SK-N-SH (cell line): ENCODE measurements at regions of chr6 and their contacts with region 1.

Region 1: DNA sequence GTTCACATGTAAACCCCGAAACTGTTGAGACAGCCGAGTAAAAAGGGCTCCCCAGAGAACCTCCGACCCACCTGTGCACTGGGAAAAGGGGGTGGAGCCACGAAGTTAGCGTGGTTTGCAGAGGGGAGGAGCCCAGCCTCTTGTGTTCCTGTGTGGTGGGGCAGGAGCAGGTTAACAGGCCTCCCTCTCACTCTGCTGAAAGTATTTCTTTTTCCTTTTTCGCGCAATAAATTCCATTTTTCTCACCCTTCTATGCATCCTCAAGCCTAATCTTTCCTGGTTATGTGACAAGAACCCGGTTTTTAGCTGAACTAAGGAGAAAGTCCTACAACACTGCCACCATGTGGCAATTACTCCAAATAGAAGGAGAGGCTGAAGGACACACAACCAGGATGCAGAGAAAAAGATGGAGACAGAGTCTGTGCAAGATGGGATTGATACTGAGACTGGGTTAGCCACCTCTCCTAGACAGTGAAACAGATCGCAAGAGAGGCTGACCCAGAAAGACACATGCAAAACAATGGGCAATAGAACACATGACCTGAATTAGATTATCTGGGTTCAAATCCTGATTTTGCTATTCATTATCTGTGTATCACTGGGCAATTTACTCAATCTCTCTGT is 168.7 kb upstream of the PRSS16 start:
- DNase-seq: peak; percentile 52
- H3K4me3 ChIP-seq: peak overlapping the region; percentile 52 to 61
- H3K27ac ChIP-seq: no peak overlapping the region; a peak in 1 of 4 replicates
- H3K4me1 ChIP-seq: peaks cover 0 to 2% of the 10 kb centered on the region in 2 experiments; a peak in 1 of 4 replicates
- H3K27me3 ChIP-seq: no peaks in the 10 kb centered on the region
- CTCF ChIP-seq: peak; percentile 83
- EP300 ChIP-seq: no peak
- RAD21 ChIP-seq: peak; percentile 87

Region 2: DNA sequence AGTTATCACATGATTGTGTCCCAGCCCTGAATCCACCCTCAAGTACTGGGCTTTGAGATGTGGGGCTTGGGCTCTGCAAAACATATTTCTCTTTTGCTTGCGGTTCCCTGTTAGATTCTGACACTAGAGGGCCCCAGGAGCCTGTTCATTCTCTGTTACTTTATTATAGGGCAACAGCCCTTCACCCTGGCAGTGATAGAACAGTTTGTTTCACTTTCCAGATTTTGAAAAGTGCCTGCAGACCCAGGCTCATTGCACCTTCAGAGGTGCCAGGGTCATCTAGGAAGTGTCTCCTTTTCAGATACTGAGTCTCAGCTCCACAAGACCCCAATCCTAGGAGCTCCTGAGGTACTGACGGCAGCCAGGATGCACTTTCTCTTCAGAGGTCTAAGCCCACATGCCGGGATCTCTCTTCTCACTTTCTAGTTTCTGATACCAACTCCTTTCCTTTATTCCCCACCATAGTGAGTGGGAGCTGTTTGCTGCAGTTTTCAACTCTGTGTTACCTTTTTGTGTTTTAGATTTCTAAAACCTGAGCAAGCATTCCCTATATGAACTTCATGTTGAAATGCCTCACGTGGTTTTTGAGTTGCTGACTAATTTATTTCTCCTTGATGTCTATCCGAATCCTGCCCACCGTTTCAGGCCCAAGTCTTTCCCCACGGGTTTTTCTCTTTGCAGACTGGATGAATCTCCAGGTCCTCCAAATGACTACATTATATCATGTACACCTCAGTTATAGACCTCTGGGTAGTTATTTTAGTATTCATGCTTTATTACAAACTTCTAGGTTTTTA is 471.2 kb before region 1 on chr6:
- CTCF ChIA-PET with region 1: interaction called, 14 read pairs
- POLR2A ChIA-PET with region 1: no interaction called
- DNase-seq: peak; percentile 71
- H3K4me3 ChIP-seq: peak overlapping the region in 1 of 2 experiments; percentile 17; a peak in 1 of 4 replicates
- H3K27ac ChIP-seq: no peak overlapping the region
- H3K4me1 ChIP-seq: no peaks in the 10 kb centered on the region; a peak in 1 of 4 replicates
- H3K27me3 ChIP-seq: no peaks in the 10 kb centered on the region; the same call in 1 of the 2 replicates
- CTCF ChIP-seq: peak; percentile 82
- EP300 ChIP-seq: no peak
- RAD21 ChIP-seq: peak; percentile 91

Region 3: GRCh38 chr6:27066802-27067201 is 12.0 kb before region 1 on chr6:
- CTCF ChIA-PET with region 1: interaction called, 11 read pairs
- POLR2A ChIA-PET with region 1: no interaction called
- DNase-seq: no peak
- H3K4me3 ChIP-seq: no peak overlapping the region
- H3K27ac ChIP-seq: no peak overlapping the region
- H3K4me1 ChIP-seq: peaks cover 0 to 4% of the 10 kb centered on the region in 2 experiments; a peak in 1 of 4 replicates
- H3K27me3 ChIP-seq: no peaks in the 10 kb centered on the region; the same call in 1 of the 2 replicates
- CTCF ChIP-seq: no peak
- EP300 ChIP-seq: no peak
- RAD21 ChIP-seq: no peak

Region 4: DNA sequence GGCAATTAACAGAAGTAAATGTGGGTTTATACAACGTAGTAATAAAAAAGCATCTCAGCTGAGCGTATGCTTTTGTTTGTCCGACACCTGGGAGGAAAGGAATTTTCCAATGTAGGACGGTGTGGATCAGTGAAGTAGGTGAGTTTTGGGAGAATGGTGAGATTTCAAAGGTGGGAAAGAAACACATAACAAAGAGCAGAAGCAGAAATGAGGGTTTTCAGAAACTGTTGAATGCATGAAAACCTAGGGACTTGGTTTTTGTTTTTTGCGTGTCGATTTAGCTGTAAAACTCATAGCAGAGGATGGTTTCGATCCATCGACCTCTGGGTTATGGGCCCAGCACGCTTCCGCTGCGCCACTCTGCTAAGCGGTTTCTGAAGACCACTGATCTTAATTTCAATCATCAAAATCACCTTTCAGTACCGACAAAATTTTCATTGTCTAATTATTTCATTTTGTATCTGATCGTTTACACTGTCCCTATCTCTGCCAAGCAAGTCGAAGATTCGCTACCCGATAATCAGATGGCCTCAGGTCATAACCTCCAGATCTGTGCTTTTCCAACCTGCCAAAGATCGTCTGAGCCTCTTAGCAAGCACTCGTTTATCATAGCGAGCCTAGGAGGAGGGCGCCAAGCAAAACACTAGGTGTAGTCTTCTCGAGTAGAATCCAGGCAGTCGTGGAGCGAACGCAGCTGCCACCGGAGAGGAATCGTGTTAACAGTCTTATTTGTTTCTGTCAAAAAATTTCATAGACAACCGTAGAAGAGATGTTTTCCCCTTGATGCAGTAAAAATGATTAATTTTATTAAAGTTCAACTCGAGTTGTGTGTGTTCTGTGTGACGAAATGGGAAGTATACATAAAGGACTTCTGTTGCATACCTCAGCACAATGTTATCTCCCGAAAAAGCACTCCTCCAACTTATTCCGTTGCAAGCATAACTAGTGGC is 254.1 kb after region 1 on chr6:
- CTCF ChIA-PET with region 1: no interaction called
- POLR2A ChIA-PET with region 1: no interaction called
- DNase-seq: peak; percentile 25
- H3K4me3 ChIP-seq: peak overlapping the region; percentile 51 to 59
- H3K27ac ChIP-seq: no peak overlapping the region
- H3K4me1 ChIP-seq: peaks cover 0 to 3% of the 10 kb centered on the region in 2 experiments; a peak in 1 of 4 replicates
- H3K27me3 ChIP-seq: peaks cover 5% of the 10 kb centered on the region; the same call in 1 of the 2 replicates
- CTCF ChIP-seq: no peak
- EP300 ChIP-seq: no peak
- RAD21 ChIP-seq: no peak

Region 5: GRCh38 chr6:27642744-27643456 is 564.1 kb after region 1 on chr6:
- CTCF ChIA-PET with region 1: no interaction called
- POLR2A ChIA-PET with region 1: no interaction called
- DNase-seq: no peak
- H3K4me3 ChIP-seq: no peak overlapping the region
- H3K27ac ChIP-seq: no peak overlapping the region
- H3K4me1 ChIP-seq: no peaks in the 10 kb centered on the region
- H3K27me3 ChIP-seq: peaks cover 32% of the 10 kb centered on the region
- CTCF ChIP-seq: no peak
- EP300 ChIP-seq: no peak
- RAD21 ChIP-seq: no peak

Region 6: DNA sequence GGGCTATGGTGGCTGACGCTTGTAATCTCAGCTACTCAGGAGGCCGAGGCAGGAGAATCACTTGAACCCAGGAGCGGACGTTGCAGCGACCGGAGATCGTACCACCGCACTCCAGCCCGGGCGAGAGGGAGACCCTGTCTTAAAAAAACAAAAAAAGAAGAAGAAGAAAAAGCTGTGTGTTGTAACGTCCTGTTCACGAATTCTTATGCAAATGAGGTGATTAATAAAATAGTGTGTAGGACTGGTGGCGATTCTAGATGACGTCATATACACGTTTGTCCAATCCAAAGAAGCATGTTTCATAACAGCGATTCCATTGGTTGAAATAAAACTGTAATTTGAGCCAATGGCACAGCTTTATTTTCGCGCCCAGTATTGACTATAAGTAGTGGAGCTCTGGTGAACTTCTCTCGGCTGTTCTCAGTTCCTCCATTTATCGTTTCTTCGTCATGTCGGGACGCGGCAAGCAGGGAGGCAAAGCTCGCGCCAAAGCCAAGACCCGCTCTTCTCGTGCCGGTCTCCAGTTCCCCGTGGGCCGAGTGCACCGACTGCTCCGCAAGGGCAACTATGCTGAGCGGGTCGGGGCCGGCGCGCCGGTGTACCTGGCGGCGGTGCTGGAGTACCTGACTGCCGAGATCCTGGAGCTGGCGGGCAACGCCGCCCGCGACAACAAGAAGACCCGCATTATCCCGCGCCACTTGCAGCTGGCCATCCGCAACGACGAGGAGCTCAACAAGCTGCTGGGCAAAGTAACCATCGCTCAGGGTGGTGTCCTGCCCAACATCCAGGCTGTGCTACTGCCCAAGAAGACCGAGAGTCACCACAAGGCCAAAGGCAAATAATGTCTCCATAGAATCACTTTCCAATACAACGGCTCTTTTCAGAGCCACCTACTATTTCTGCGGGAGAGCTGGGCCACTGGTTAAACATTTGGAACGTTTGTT is 786.3 kb after region 1 on chr6:
- CTCF ChIA-PET with region 1: no interaction called
- POLR2A ChIA-PET with region 1: no interaction called
- DNase-seq: peak; percentile 85
- H3K4me3 ChIP-seq: peak overlapping the region; percentile 47 to 80
- H3K27ac ChIP-seq: peak overlapping the region; percentile 80 to 97
- H3K4me1 ChIP-seq: peaks cover 0 to 20% of the 10 kb centered on the region in 2 experiments; a peak in 2 of 4 replicates
- H3K27me3 ChIP-seq: no peaks in the 10 kb centered on the region
- CTCF ChIP-seq: no peak
- EP300 ChIP-seq: no peak; a peak in 1 of 4 replicates
- RAD21 ChIP-seq: no peak